ENCODE measurements at regions of chr22 and their contacts with region 1.

Region 1: DNA sequence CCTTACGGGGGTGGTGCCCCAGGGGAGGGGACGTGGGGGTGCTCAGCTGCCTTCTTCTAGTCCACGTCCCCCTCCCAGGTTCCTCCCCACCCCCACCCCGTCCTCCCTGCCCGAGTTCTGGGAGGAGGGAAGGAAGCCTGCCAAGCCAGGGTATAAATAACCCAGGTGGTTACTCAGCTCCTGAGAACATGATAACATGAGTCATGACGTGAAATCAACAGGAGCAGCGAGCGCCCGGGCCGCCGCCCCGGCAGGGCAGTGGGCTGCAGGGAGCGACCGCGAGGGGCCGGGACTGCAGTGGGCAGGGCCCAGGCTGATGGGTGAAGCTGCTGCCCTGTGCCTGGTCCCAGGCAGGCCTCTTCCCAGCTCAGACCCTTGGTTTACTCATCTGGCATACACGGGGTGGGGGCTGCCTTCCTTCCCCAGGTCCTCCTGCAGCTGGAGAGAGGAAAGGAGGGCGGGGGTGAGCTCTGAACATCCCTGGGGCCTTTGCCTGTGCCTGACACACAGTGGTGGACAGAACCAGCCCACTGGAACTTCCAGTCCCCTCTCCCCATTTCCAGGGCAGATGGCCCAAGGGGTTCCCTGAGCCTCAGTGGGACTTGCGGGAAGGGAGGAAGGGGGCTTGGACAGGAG is 8.8 kb upstream of the PDGFB start:
- DNase-seq: peak; percentile 74
- H3K4me3 Mint-ChIP-seq: no peak overlapping the region
- H3K27ac Mint-ChIP-seq: no peak overlapping the region
- H3K4me1 Mint-ChIP-seq: peaks cover 29% of the 10 kb centered on the region
- H3K27me3 Mint-ChIP-seq: peaks cover 4% of the 10 kb centered on the region

Region 2: DNA sequence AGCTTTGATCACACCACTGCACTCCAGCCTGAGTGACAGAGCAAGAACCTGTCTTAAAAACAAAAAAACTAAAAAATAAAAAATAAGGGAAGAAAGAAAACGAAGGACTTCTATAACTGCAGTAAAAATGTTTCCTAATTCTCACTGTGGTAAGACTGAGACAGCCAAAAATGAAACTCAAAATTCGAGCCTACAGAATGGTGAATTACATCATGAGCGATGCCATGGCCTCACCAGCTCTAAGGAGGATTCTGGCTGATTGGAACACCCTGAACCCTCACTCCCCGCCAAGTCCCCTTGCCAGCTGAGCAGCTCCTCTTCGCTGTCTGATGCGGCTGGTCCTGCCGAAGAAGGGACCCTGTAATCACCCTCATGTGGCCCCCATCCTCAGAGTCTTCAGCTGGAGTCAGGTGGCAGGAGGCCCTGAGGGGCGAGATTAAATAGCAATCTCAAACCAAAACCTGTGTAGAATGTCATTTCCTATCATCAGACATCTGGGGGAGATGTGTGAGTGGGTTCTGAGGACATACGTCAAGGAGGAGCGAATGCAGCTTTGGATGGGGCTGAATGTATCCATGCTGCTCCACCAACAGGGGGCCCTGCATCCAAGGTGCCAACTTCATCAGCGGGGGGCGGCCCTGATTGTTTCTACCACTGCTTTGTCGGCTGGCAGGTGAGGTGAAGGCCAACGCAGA is 38.0 kb before region 1 on chr22:
- CTCF ChIA-PET with region 1: no interaction called
- POLR2A ChIA-PET with region 1: no interaction called
- intact Hi-C with region 1: no loop called
- DNase-seq: peak; percentile 51
- H3K4me3 Mint-ChIP-seq: no peak overlapping the region
- H3K27ac Mint-ChIP-seq: no peak overlapping the region
- H3K4me1 Mint-ChIP-seq: peaks cover 3% of the 10 kb centered on the region
- H3K27me3 Mint-ChIP-seq: peaks cover 11% of the 10 kb centered on the region

Region 3: DNA sequence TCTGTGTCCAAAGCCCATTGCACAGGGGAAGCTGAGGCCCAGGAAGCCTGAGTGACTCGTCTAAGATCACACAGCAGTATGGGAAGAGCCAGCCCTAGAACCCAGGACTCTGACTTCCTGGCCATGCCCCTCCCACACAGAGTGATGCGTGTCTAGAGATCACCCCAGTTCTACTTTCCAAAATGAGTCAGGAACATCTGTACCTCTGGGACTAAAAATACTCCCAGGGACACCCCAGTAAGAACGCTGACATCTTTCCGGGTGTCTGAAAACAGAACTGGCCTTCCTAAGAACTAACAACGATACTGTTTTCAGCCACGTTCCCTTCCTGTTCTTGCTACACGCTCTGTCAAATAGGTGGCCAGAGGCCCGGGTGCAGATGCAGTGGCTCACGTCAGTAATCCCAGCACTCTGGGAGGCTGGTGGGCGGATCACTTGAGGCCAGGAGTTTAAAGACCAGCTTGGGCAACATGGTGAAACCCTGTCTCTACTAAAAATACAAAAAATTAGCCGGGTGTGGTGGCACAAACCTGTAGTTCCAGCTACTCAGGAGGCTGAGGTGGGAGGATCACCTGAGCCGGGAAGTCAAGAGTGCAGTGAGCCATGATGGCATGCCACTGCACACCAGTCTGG is 13.0 kb after region 1 on chr22:
- CTCF ChIA-PET with region 1: interaction called, 3 read pairs
- POLR2A ChIA-PET with region 1: no interaction called
- intact Hi-C with region 1: loop called (anchors 1 kb)
- DNase-seq: peak; percentile 86
- H3K4me3 Mint-ChIP-seq: no peak overlapping the region
- H3K27ac Mint-ChIP-seq: peak overlapping the region; percentile 82
- H3K4me1 Mint-ChIP-seq: peaks cover 26% of the 10 kb centered on the region
- H3K27me3 Mint-ChIP-seq: peaks cover 3% of the 10 kb centered on the region

Measured in activated CD4-positive, alpha-beta memory T cell treated with anti-CD3 and anti-CD28 coated beads for 36 hours (primary cell).